ENCODE measurements at regions of chr13 and their contacts with region 1.

Region 1: DNA sequence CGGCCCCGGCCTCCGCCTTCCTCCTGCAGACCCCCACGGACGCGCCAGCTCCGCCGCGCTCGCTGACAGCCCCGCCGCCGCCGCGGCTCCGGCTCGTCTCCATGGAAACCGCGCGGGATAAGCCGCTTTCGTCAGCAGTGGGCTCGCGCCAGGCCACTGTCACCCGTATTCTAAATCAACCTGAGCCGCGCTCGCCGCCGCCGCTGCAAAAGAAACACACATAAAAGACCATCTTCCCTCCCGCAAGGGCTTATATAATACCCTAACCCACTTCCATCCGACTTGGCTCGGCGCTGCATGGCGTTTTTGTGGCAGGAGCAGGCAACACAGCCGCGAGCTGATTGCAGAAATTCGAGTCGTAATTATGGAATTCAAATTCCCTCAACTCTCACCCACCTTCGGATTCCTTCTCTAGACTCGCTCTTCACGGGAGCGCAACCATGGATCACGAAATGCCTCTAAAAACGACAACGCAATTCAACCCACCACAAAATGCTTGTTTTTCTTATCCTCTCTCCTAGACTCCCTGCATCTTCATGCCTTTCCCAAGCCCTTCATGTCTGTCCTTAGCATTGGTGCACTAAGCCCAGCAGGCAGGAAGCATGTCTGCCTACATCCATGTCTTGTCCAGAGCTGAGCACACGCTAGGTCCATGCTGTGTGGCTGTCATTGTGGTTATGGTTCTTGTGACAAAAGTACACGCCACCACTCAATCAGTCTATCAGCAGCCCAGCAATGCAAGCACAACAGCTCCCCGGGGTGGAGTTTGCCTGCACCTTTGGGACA is at the start of gene AMER2:
- DNase-seq: peak; percentile 86 to 94 (median 91)
- H3K4me3 ChIP-seq: peak within 1 kb of the TSS; percentile 45 to 91 (median 76)
- H3K27ac ChIP-seq: peak within 1 kb of the TSS; percentile 86 to 100 (median 98)
- H3K27me3 ChIP-seq: peaks cover 0 to 5% (median 0%) of the 10 kb centered on the region in 45 donors
- CTCF ChIP-seq: peak in 5 of 56 donors; percentile 2 to 37 (median 10)
- total RNA-seq, gene AMER2: 44.5 to 389 (median 125) TPM

Region 2: DNA sequence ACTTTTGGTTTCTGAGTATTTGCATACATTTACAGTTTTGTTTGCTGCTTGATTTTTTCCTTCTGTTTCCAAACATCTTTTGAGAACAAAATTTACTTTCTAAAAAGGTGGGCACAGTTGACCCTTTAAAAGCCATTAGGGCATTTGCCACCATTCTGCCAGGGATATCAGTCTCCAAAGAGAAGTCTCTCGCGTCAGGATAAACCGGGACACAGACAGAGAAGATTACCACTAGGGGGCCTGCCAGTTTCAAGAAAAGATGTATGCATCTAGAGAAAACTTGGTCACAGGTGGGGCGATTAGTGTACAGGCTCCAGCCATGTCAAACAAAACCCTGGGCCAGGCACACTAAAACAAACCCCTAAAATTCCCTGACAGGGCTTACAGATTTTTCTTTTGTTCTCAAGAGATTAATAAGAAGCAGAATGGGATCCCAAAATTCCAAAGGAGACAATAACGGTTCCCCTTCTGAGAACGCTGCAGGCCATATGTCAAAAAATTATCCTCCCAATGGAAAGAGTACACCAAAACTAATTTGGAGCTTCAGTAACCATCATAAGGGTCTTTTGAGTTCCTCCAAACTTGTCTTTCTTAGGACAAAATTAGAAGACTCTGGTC is 86.5 kb before region 1 on chr13:
- intact Hi-C with region 1: loop called in 1 of 2 experiments (anchors 10 kb)
- DNase-seq: peak in 7 of 10 donors; percentile 41 to 82 (median 66)
- H3K4me3 ChIP-seq: peak overlapping the region in 21 of 59 donors; percentile 3 to 42 (median 18)
- H3K27ac ChIP-seq: peak overlapping the region in 56 of 59 donors; percentile 9 to 89 (median 71)
- H3K27me3 ChIP-seq: no peaks in the 10 kb centered on the region
- CTCF ChIP-seq: peak; percentile 59 to 89 (median 78)

Region 3: GRCh38 chr13:25114220-25114619 is 57.5 kb before region 1 on chr13:
- intact Hi-C with region 1: loop called in 1 of 2 experiments (anchors 5 kb)
- DNase-seq: peak; percentile 72 to 89 (median 85)
- H3K4me3 ChIP-seq: peak overlapping the region in 16 of 59 donors; percentile 2 to 40 (median 16)
- H3K27ac ChIP-seq: peak overlapping the region in 37 of 59 donors; percentile 5 to 74 (median 50)
- H3K27me3 ChIP-seq: no peaks in the 10 kb centered on the region
- CTCF ChIP-seq: peak; percentile 64 to 99 (median 91)

Region 4: DNA sequence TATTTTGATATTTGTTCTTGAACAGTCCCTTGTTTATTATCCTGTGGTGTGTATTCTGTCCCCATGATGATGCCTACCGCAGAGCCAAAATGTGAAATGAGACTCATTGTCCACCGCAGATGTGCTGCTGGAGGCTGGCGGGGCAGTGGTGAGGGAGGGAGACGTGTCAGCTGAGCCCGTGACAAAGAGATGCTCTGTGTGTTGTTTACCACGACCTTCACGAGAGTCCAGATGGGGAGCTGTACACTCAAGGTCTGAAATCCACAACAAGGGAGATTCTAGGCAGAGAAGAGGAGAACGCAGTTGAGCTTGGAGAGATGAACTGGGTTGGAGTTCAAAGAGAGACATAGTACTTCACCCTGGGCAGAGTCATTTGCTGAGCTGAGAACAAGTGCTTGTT is 21.2 kb after region 1 on chr13:
- intact Hi-C with region 1: loop called (anchors 1 to 2 kb)
- DNase-seq: peak in 9 of 10 donors; percentile 75 to 96 (median 90)
- H3K4me3 ChIP-seq: peak overlapping the region in 16 of 59 donors; percentile 1 to 45 (median 27)
- H3K27ac ChIP-seq: peak overlapping the region; percentile 80 to 100 (median 98)
- H3K27me3 ChIP-seq: peaks cover 0 to 8% (median 0%) of the 10 kb centered on the region in 45 donors
- CTCF ChIP-seq: peak in 8 of 56 donors; percentile 3 to 28 (median 13)

Region 5: DNA sequence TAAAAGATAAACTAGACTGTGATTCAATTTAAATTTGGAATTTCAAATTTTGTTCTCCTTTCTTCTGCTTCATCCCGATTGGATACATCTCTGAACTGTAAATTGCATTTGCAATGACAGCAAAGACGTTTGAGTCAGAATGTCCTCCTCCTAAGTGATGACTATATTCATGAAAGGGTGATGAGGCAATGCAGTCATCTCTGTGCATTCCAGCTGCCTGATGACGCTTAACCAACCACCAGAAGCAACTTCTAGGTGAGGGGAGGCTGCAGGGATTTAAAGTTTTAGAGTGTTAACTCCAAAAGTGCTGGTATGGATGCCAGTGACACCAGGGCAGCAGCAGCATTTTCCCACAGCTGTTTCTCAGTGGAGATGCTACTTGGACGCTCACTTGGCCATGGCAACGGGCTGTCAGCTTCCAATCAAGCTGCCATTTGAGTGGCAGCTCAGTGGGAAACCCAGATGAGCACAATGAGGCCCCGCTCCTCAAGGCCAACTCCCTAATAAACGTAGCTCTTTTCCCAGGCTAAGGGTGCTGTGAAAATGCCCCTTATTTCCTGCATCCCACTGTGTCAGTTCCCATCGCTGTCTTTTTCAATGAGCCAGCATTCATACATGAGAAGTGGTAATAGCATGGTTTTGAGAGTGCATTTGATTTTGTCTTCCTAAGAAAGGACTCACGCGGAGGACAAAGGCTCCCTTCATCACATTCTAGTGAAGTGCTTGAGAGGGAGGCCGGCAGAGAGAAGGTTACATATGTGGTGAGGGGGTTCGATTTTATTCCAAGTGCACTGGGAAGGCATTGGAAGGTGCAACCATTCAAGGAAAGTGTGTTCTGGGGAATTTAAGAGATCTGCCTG is 45.5 kb after region 1 on chr13:
- intact Hi-C with region 1: no loop called
- DNase-seq: no peak
- H3K4me3 ChIP-seq: peak overlapping the region in 6 of 59 donors; percentile 2 to 40 (median 11)
- H3K27ac ChIP-seq: peak overlapping the region in 33 of 59 donors; percentile 1 to 82 (median 57)
- H3K27me3 ChIP-seq: no peaks in the 10 kb centered on the region
- CTCF ChIP-seq: no peak

Region 6: GRCh38 chr13:25249001-25249543 is 77.4 kb after region 1 on chr13:
- intact Hi-C with region 1: loop called in 1 of 2 experiments (anchors 2 kb)
- DNase-seq: peak in 6 of 10 donors; percentile 49 to 75 (median 58)
- H3K4me3 ChIP-seq: peak overlapping the region in 3 of 59 donors; percentile 8 to 18 (median 12)
- H3K27ac ChIP-seq: peak overlapping the region in 58 of 59 donors; percentile 6 to 90 (median 72)
- H3K27me3 ChIP-seq: no peaks in the 10 kb centered on the region
- CTCF ChIP-seq: peak; percentile 41 to 89 (median 71)

Region 7: GRCh38 chr13:25286969-25287961 is 115.6 kb after region 1 on chr13 and contains the start of gene MTMR6:
- intact Hi-C with region 1: loop called (anchors 1 to 2 kb)
- DNase-seq: peak; percentile 86 to 96 (median 92)
- H3K4me3 ChIP-seq: peak within 1 kb of the TSS; percentile 58 to 100 (median 94)
- H3K27ac ChIP-seq: peak within 1 kb of the TSS in 58 of 59 donors; percentile 44 to 95 (median 87)
- H3K27me3 ChIP-seq: no peaks in the 10 kb centered on the region
- CTCF ChIP-seq: peak; percentile 96 to 100 (median 100)
- total RNA-seq, gene MTMR6: 12.7 to 34.5 (median 25.1) TPM

Region 8: DNA sequence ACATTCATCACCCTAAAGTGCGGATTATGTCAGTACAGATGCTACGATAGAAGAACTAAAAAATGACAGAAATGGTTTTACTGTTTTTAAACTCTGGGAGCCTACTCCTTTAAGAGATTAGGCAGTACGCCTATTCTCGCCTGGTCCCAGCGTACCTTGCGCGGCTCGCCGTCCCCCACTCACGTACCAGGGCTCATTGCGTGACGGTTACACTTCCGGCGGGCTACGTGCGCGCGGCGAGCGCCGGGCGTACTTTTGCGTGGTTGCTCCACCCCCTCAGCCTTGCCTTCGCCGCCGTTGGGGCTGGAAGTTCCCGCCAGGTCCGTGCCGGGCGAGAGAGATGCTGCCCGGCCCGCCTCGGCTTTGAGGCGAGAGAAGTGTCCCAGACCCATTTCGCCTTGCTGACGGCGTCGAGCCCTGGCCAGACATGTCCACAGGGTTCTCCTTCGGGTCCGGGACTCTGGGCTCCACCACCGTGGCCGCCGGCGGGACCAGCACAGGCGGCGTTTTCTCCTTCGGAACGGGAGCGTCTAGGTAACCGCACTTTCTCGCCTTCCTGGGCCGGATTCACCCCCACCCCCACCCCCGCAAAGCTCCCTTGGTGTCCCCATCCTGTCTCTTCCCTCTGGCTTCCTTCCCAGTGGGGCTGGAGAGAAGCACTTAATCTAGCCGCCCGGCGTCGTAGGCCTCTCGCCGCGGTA is 129.8 kb after region 1 on chr13 and contains the start of gene NUP58:
- intact Hi-C with region 1: loop called in 1 of 2 experiments (anchors 5 kb)
- DNase-seq: peak; percentile 95 to 98 (median 96)
- H3K4me3 ChIP-seq: peak within 1 kb of the TSS; percentile 59 to 99 (median 89)
- H3K27ac ChIP-seq: peak within 1 kb of the TSS; percentile 77 to 98 (median 93)
- H3K27me3 ChIP-seq: no peaks in the 10 kb centered on the region
- CTCF ChIP-seq: peak in 42 of 56 donors; percentile 5 to 65 (median 33)
- total RNA-seq, gene NUP58: 37.0 to 77.1 (median 58.6) TPM

Region 9: GRCh38 chr13:25384752-25385441 is 213.2 kb after region 1 on chr13:
- intact Hi-C with region 1: no loop called
- DNase-seq: no peak
- H3K4me3 ChIP-seq: no peak overlapping the region
- H3K27ac ChIP-seq: no peak overlapping the region
- H3K27me3 ChIP-seq: peaks cover 0 to 4% (median 0%) of the 10 kb centered on the region in 45 donors
- CTCF ChIP-seq: no peak